H1 (cell line): ENCODE measurements at regions of chr13 and their contacts with region 1.

Region 1: GRCh38 chr13:94112227-94112626 is 367.3 kb downstream of the DCT start:
- DNase-seq: no peak
- H3K4me3 ChIP-seq: no peak overlapping the region
- H3K27ac ChIP-seq: no peak overlapping the region
- H3K4me1 ChIP-seq: no peaks in the 10 kb centered on the region
- H3K27me3 ChIP-seq: no peaks in the 10 kb centered on the region
- CTCF ChIP-seq: no peak
- EP300 ChIP-seq: no peak
- POLR2A ChIP-seq: no peak
- RAD21 ChIP-seq: no peak

Region 2: DNA sequence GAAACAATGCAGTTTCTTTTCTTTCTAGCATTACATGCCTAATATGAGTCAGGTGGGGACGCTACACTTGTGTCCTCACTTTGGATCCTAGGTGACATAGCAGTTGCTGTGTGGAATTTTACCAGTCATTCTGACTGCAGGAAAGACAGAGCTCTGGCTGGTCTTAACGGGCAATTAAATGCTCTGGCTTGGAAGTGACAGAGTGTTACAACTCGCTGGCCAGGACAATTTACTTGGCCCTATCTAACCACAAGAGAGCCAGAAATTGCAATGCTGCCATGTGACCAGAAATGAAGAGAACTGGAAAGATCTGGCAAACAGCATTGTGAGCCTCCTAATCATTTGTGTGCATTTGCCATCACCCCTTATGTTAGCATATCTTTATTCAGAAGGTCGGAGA is 16.2 kb after region 1 on chr13:
- CTCF ChIA-PET with region 1: interaction called, 33 read pairs
- POLR2A ChIA-PET with region 1: no interaction called
- DNase-seq: no peak
- H3K4me3 ChIP-seq: no peak overlapping the region
- H3K27ac ChIP-seq: no peak overlapping the region
- H3K4me1 ChIP-seq: peaks cover 0 to 2% (median 0%) of the 10 kb centered on the region in 4 experiments; a peak in 1 of 7 replicates
- H3K27me3 ChIP-seq: no peaks in the 10 kb centered on the region
- CTCF ChIP-seq: no peak
- EP300 ChIP-seq: no peak
- POLR2A ChIP-seq: no peak
- RAD21 ChIP-seq: no peak